CD8-positive, alpha-beta memory T cell (primary cell): ENCODE measurements at regions of chr12 and their contacts with region 1.

Region 1: DNA sequence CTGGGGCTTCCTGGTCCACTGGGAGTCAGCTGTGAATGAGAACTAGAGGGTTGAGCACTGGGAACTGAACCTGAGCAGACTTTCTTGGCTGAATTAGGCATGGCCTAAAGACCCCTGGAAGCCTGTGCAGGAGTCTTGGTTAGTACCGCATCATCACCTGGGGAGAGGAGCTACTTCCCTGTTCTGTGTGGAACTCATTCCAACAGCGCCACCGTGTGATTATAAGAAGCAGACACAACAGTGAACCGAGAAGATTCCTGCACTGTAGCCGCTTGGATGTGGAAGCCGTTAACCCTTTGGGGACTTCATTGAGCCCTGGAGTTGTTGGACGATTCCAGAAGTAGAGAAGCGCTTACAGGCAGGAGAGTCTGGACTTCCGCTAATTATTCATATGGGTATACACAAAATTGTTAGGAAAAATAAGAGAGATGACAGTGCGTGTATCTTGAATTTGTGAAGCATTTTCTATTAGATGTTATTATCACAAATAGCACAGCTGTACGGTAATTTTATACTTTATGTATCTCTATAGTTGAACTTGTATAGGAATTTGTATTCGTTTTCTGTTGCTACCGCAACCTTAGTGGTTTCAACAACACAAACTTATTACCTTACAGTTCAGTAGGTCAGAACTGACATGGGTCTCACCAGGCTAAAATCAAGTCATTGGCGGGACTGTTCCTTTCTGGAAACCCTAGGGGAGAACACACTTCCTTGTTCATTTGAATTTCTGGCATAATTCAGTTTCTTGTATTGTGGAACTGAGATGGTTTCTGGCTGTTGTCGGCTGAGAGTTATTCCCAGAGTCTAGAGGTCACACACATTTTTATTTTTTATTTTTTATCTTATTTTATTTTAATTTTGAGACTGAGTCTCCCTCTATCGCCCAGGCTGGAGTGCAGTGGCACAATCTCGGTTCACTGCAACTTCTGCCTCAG is 100.7 kb downstream of the C2CD5 start:
- DNase-seq: peak; percentile 28 to 78 (median 47)
- H3K4me3 ChIP-seq: no peak overlapping the region
- H3K4me3 Mint-ChIP-seq: no peak overlapping the region
- H3K27ac ChIP-seq: no peak overlapping the region
- H3K27ac Mint-ChIP-seq: peak overlapping the region in 1 of 8 donors; percentile 15
- H3K4me1 ChIP-seq: peaks cover 6% of the 10 kb centered on the region
- H3K4me1 Mint-ChIP-seq: peaks cover 4 to 19% (median 6%) of the 10 kb centered on the region in 3 donors
- H3K27me3 ChIP-seq: no peaks in the 10 kb centered on the region
- H3K27me3 Mint-ChIP-seq: no peaks in the 10 kb centered on the region

Region 2: GRCh38 chr12:22083167-22083566 is 360.5 kb before region 1 on chr12:
- CTCF ChIA-PET with region 1: interaction called, 11 read pairs
- POLR2A ChIA-PET with region 1: no interaction called
- DNase-seq: peak in 3 of 5 donors; percentile 5 to 30 (median 30)
- H3K4me3 ChIP-seq: no peak overlapping the region
- H3K4me3 Mint-ChIP-seq: no peak overlapping the region
- H3K27ac ChIP-seq: no peak overlapping the region
- H3K27ac Mint-ChIP-seq: no peak overlapping the region
- H3K4me1 ChIP-seq: no peaks in the 10 kb centered on the region
- H3K4me1 Mint-ChIP-seq: no peaks in the 10 kb centered on the region
- H3K27me3 ChIP-seq: no peaks in the 10 kb centered on the region
- H3K27me3 Mint-ChIP-seq: peaks cover 0 to 4% of the 10 kb centered on the region in 2 donors

Region 3: DNA sequence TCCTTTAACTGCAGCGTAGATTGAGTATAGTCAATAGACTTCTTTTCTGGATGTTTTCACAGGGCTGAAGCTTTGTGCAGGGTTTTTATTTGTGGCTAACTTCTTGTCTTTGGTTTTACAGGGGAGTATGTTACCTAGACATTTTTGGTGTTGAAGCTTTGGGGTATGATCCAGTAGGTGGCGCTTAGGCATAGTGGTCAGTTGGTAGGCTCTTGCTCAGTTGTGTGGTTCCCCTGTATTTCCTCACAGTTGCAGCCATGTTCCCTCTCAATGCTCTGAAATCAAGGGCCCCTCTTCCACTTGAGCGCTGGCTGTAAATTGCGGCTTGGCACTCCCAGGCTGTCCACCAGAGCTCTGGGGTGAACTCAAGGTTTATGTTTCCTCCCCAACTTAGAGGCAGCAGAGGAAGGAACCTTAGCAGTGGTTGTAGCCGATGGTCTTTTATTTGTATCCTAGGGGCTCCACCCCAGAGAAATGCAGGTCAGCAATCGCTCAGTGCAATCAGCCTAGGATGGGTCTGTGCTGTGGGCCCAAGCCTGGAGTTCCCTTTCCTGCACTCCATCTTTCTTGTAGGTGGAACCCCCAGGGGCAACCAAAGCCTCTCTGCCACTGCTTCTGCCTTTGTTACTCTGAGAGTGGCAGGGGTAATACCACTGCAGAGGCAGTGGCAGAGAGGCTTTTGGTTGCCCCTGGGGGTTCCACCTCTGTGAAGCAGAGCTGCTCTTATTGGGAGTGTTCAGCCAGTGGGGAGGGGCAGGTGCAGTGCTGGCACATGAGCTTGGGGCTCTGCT is 342.5 kb before region 1 on chr12:
- CTCF ChIA-PET with region 1: interaction called, 15 read pairs
- POLR2A ChIA-PET with region 1: no interaction called
- DNase-seq: peak in 3 of 5 donors; percentile 16 to 61 (median 47)
- H3K4me3 ChIP-seq: no peak overlapping the region
- H3K4me3 Mint-ChIP-seq: peak overlapping the region in 1 of 7 donors; percentile 40
- H3K27ac ChIP-seq: no peak overlapping the region
- H3K27ac Mint-ChIP-seq: no peak overlapping the region
- H3K4me1 ChIP-seq: peaks cover 10% of the 10 kb centered on the region
- H3K4me1 Mint-ChIP-seq: peaks cover 6 to 11% (median 8%) of the 10 kb centered on the region in 3 donors
- H3K27me3 ChIP-seq: no peaks in the 10 kb centered on the region
- H3K27me3 Mint-ChIP-seq: no peaks in the 10 kb centered on the region

Region 4: DNA sequence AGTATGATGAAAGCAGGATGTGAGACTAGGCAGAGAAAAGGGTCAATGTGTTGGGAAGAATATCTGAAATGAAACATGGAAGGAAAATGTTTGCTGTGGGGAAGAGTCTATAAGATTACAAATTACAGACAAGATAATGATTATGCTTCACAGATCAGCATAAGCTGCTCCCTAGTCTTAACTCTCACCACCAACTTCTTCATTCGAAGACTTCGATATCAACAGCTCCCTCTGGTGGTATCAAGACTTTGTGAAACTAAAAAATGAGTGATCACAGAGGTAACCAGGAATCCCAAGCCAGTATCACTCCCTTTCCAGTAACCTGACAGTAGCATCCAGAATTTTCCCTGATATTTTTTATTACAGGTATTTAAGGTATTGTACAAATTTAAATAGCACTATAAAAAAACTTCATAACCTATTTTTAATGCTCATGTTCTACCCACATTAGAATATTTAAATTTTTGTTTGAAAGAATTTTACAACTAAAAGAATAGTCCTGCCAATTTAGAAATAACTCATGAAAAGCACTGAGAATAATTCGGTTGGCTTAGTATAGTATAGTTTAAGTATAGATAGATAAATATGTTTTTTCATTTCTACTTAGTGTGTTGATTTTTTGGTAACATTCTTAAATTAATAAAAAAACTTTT is 16.3 kb after region 1 on chr12:
- CTCF ChIA-PET with region 1: interaction called, 12 read pairs
- POLR2A ChIA-PET with region 1: no interaction called
- DNase-seq: peak in 2 of 5 donors; percentile 21 to 23
- H3K4me3 ChIP-seq: no peak overlapping the region
- H3K4me3 Mint-ChIP-seq: no peak overlapping the region
- H3K27ac ChIP-seq: no peak overlapping the region
- H3K27ac Mint-ChIP-seq: peak overlapping the region in 1 of 8 donors; percentile 46
- H3K4me1 ChIP-seq: no peaks in the 10 kb centered on the region
- H3K4me1 Mint-ChIP-seq: peaks cover 0 to 5% (median 4%) of the 10 kb centered on the region in 3 donors
- H3K27me3 ChIP-seq: no peaks in the 10 kb centered on the region
- H3K27me3 Mint-ChIP-seq: no peaks in the 10 kb centered on the region

Region 5: DNA sequence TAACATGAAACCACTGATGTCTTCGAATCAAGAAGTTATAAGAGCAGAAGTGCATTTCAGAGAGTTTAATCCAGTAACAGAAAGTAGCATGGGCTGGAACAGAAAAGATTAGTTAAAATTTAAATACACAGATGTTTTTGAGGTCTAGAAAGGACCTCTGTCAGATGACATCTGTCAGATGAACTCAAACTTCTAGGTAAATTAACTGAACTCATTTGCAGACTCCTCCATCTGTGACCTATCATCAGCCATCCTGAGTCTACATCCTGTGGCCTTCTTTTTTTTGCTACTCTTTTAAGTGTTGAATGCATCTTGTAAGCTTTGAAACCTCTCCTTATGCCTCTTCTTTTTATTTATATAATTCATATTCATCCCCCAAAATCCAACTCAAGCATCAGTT is 47.4 kb after region 1 on chr12:
- CTCF ChIA-PET with region 1: no interaction called
- POLR2A ChIA-PET with region 1: interaction called, 10 read pairs
- DNase-seq: no peak
- H3K4me3 ChIP-seq: no peak overlapping the region
- H3K4me3 Mint-ChIP-seq: no peak overlapping the region
- H3K27ac ChIP-seq: no peak overlapping the region
- H3K27ac Mint-ChIP-seq: peak overlapping the region in 1 of 8 donors; percentile 30
- H3K4me1 ChIP-seq: no peaks in the 10 kb centered on the region
- H3K4me1 Mint-ChIP-seq: no peaks in the 10 kb centered on the region
- H3K27me3 ChIP-seq: no peaks in the 10 kb centered on the region
- H3K27me3 Mint-ChIP-seq: no peaks in the 10 kb centered on the region